GM18951 (cell line): ENCODE measurements at regions of chr10 and their contacts with region 1.

Region 1: GRCh38 chr10:84214612-84215235 is 10.6 kb downstream of the LRIT2 start:
- POLR2A ChIP-seq: no peak

Region 2: DNA sequence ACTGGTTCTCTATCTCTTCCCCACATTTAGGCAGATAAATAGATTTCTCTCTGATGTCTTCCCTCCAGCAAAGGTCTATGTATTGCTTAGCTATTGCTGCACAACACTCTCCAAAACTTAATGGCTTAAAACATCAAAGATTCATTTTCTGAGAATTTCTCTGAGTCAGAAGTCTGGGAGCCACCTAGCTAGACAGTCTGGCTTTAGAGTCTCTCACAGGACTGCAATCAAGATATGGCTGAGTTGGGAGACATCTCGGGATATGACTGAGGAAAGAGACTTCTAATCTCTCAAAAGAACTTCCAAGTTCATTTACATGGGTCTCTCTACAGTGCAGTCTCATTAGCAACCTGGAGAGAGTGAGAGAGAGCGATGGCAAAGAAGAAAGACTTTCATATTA is 629.0 kb before region 1 on chr10:
- in situ Hi-C with region 1: no loop called
- POLR2A ChIP-seq: no peak

Region 3: DNA sequence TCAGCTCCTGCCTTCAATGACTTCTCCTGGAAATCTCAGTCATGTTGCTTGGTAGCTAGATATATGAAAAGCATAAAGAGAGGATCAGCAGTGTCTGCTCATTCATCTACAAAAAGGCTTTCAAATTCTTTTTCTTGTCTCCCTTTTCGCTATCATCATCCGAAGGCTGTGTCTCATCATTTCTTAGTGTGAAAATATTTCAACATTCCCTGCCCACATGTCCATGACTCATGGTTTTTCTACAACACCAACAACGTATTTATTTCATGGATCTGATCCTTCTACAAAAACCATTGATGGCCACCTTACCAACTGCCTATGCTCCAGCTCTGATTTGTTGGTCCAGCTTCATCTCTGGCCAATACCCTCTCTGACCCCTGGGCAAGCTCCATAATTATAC is 548.0 kb before region 1 on chr10:
- in situ Hi-C with region 1: no loop called
- POLR2A ChIP-seq: no peak

Region 4: GRCh38 chr10:84126785-84127167 is 87.9 kb before region 1 on chr10:
- in situ Hi-C with region 1: no loop called
- POLR2A ChIP-seq: no peak

Region 5: DNA sequence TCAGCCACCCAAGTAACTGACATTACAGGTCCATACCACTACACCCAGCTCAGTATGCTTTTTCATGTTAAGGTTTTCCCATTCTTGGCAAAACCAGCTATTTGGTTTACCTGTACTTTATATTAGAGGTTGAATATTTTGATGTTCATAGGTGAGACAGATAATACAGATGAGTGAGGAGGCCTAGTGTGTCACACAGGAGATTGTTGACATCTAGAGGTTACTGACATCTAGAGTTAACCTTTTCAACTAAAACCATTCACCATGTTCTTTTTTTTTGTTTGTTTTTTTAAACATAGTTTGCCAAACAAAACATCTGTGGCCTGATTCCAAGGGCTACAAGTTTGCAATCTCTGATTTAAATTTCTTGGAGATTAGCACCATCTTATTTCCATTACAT is 67.4 kb before region 1 on chr10:
- in situ Hi-C with region 1: loop called (anchors 5 kb)
- POLR2A ChIP-seq: no peak

Region 6: DNA sequence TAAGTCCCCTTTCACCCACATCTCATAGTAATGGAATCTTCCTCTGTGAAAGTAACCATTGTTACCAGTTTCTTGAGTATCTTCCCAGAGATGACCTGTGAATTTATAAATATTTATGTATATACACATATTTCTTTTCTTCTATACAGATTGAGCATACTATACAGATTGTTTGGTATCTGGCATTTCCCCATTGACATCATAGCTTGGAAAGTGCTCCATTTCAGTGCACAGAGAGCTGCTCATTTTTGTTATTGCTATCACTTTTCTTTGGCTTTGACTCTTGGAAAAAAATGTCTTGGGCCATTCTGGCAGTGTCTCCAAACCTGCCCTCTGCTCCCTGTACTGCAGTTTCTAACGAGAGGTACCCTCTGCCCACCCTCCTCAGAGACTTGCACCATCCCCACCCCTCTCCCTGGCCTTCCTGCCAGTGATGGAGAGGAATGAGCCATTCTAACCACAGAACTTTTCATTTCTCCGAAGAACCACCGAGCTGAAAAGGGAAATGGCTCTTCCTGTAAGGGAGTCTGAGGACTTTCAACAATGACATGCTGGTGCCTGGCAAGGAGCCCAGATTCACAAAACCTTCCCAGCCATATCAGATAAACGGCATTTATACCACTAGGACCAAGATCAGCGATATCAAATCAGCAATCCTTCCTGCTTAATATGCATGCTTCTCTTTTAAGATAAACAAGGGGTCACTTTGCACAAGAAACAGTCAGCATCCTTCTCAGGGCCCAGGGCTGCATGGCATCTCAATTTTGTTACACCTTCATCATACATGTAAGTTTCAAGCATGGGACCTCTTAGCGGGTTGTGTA is 94.0 kb after region 1 on chr10:
- in situ Hi-C with region 1: no loop called
- POLR2A ChIP-seq: no peak